ENCODE measurements at regions of chr17 and their contacts with region 1.

Region 1: DNA sequence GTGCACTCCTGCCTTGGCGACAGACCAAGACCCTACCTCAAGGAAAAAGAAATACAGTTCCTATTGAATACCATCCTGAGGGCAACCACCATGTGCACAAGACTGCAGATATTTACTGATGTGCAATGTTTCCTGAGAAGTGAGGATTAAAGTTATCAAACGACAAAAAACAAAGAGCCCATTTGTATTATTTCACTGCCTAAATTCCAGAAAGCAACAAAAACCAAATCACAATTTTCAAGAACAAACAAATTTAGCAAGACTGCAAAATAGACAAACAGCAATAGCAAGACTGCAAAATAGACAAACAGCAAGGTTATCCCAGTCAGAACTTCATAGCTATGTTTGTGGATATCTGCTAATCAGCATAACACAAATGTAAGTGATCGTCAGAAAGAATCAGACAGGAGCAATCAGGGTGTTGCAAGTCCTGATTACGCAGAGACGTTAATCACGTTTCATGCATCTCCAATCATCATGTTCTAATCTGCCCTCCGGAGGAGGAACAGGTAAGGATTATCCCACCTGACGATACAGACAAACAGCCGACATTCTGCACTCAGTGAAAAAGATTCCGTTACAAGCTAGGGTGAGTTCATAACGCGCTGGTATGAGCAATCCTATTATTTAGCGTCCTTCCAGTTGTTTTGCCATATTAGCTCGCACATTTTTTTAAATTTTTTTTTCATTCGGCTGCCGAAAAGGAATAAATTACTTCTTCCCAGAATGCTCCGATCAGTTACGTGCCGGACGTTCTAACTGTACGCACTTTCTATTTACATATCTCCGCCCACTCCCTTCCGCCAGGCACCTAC is 2.9 kb downstream of the TMEM107 start:
- DNase-seq: peak; percentile 96
- ATAC-seq: peak; percentile 86
- H3K4me3 Mint-ChIP-seq: peak overlapping the region; percentile 89
- H3K27ac Mint-ChIP-seq: peak overlapping the region; percentile 100
- H3K4me1 Mint-ChIP-seq: peaks cover 39% of the 10 kb centered on the region
- H3K27me3 Mint-ChIP-seq: no peaks in the 10 kb centered on the region
- CTCF ChIP-seq: no peak

Region 2: DNA sequence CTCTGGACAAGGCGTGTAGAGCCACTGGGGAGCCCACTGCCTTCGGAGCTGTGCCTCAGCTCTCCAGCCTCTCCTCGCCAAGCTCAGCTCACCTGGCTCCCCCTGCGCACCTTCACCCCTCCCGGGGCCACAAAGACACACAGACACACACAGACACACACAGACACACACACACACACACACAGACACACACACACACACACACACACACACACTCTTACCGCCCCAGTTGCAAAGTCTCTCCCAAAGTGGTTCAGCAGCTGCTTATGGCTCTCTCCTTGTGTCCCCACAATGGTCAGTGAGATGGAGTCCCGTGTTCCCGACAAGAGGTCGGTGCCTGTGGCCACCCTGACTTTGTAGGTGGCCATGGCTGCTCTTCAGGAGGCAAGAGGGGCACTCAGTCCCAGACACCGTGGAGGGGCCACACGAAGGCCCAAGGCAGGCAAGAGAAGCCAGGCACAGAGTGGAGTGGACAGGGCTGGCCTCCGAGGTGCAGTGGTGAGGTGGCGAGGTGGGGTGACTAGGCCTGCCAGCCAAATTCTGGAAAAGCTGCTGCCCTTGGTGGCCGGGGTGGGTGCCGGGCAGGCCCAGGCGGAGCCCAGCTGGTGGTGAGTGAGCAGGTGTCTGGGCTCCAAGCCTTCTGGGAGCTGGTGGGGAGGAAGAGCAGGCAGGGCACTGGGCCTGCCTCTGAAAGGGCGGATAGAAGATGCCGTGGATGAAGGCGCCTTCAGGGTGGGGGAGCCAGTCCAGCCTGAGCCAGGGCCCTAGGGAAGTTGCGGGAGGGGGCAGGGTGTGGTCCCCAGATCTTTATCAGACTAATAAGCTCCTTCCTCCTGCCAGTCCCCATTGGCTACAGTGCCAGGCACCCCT is 86.0 kb before region 1 on chr17 and contains the start of gene ALOX12B:
- CTCF ChIA-PET with region 1: no interaction called
- POLR2A ChIA-PET with region 1: no interaction called
- intact Hi-C with region 1: no loop called
- DNase-seq: no peak
- ATAC-seq: no peak
- H3K4me3 Mint-ChIP-seq: no peak within 1 kb of the TSS
- H3K27ac Mint-ChIP-seq: no peak within 1 kb of the TSS
- H3K4me1 Mint-ChIP-seq: no peaks in the 10 kb centered on the region
- H3K27me3 Mint-ChIP-seq: peaks cover 20% of the 10 kb centered on the region
- CTCF ChIP-seq: no peak
- total RNA-seq, gene ALOX12B: 4.3 to 5.2 TPM

Region 3: GRCh38 chr17:8131844-8132441 is 41.3 kb before region 1 on chr17:
- CTCF ChIA-PET with region 1: interaction called, 3 read pairs
- POLR2A ChIA-PET with region 1: interaction called, 33 read pairs
- intact Hi-C with region 1: no loop called
- DNase-seq: no peak
- ATAC-seq: peak; percentile 63
- H3K4me3 Mint-ChIP-seq: no peak overlapping the region
- H3K27ac Mint-ChIP-seq: no peak overlapping the region
- H3K4me1 Mint-ChIP-seq: peaks cover 8% of the 10 kb centered on the region
- H3K27me3 Mint-ChIP-seq: peaks cover 6% of the 10 kb centered on the region
- CTCF ChIP-seq: no peak

Region 4: DNA sequence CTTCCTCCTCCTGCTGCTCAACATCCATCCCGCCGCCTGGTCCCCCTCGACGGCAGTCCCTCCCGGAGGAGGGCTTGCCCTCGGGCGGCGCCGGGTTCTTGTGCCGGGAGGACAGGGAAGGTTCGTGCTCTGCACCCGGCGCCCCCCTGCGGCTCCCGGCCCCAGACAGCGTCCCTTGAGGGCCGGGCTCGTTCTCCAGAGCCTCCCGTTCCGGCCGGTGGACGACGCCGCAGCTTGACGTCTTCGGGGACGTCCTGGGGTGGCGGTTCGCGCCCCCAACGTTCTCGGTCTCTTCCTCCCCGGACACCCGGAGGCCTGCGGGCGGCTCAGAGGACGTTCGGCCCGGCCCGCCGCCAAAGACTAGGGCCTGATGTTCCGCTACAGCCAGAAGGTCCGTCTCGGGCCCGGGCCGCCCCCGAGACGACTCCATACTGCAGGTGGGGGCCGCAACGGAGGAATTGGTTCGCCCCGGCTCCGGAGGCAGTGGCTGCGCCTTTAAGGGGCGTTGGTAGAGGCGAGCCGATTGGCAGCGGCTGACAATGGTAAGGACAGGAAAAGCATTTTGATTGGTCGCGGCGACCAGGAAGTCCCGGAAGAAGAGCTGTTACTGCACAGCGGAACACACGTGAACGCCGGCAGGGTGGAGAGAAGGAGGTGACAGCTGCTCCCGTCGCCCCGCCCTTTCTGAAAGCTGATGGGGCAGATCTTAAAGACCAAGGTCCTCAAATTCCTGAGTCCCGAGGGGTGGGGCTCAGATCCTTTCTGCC is 16.6 kb after region 1 on chr17 and contains the start of gene BORCS6:
- CTCF ChIA-PET with region 1: interaction called, 4 read pairs
- POLR2A ChIA-PET with region 1: interaction called, 273 read pairs
- intact Hi-C with region 1: no loop called
- DNase-seq: peak; percentile 98
- ATAC-seq: peak; percentile 67
- H3K4me3 Mint-ChIP-seq: no peak within 1 kb of the TSS
- H3K27ac Mint-ChIP-seq: peak within 1 kb of the TSS; percentile 90
- H3K4me1 Mint-ChIP-seq: peaks cover 10% of the 10 kb centered on the region
- H3K27me3 Mint-ChIP-seq: no peaks in the 10 kb centered on the region
- CTCF ChIP-seq: no peak
- total RNA-seq, gene BORCS6: 5.5 to 6.2 TPM

Region 5: DNA sequence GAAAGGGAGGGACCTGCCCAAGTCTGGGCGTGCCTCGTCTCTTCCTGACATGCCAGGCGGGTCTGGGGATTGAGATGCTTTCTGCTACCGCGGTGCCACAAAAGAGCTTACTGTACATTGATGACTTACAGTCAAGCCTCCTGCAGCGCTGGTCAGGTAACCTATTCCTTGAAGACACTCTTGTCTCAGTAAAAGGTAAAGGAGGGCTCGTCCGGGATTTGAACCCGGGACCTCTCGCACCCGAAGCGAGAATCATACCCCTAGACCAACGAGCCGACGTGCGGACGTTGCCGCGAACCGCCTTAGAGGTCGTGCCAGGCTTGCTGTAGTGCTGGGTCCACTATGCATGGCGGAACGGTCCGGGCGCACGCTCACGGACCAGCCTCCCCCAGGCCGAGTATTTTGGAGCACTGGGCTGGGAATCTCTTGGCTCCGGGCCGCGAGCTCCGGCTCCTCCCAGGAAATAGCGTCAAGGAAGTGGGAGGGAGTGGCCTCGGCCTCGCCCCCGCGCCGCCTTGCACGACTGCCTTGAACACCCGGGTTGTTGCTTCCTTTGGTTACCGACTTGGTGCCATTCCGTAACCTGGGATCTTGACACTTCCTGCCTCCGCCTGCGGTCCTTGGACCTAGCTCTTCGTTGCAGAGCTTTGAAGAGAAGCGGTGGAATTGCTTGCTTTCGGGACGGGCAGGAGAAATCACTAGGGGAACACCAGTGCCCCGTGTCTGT is 49.5 kb after region 1 on chr17:
- CTCF ChIA-PET with region 1: no interaction called
- POLR2A ChIA-PET with region 1: interaction called, 92 read pairs
- intact Hi-C with region 1: no loop called
- DNase-seq: peak; percentile 95
- ATAC-seq: peak; percentile 40
- H3K4me3 Mint-ChIP-seq: peak overlapping the region; percentile 97
- H3K27ac Mint-ChIP-seq: peak overlapping the region; percentile 99
- H3K4me1 Mint-ChIP-seq: peaks cover 34% of the 10 kb centered on the region
- H3K27me3 Mint-ChIP-seq: peaks cover 8% of the 10 kb centered on the region
- CTCF ChIP-seq: no peak

Region 6: DNA sequence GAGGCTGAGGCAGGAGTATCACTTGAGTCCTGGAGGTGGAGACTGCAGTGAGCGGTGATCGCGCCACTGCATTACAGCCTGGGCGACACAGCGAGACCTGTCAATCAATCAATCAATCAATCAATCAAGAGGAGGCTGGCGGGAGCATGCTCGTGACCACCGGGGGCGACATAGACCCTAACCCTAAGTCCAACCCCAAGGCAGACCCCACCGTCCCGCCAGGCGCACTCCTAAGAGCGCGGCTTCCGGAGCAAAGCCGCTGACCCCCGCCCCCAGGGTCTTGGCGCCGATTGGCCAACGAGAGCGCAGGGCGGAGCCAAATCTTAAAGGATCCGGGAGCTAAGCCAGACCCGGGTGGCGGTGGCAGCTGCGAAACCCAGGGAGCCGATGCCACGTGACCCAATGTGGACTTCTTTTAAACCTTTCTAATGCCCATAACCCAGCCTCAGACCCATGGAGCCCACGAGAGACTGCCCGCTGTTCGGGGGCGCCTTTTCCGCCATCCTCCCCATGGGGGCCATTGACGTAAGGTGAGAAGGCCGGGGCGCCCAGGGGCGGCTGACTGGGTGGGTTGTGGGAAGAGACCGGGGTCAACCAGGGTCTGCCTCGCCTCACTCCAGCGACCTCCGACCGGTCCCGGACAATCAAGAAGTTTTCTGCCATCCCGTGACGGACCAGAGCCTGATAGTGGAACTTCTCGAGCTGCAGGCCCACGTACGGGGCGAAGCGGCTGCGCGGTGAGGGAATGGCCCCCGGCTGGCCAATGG is 115.3 kb after region 1 on chr17 and contains the start of gene RANGRF:
- CTCF ChIA-PET with region 1: no interaction called
- POLR2A ChIA-PET with region 1: interaction called, 12 read pairs
- intact Hi-C with region 1: no loop called
- DNase-seq: peak; percentile 91
- ATAC-seq: peak; percentile 91
- H3K4me3 Mint-ChIP-seq: peak within 1 kb of the TSS; percentile 87
- H3K27ac Mint-ChIP-seq: peak within 1 kb of the TSS; percentile 97
- H3K4me1 Mint-ChIP-seq: peaks cover 32% of the 10 kb centered on the region
- H3K27me3 Mint-ChIP-seq: no peaks in the 10 kb centered on the region
- CTCF ChIP-seq: no peak
- total RNA-seq, gene RANGRF: 44.1 to 47.8 TPM

Region 7: GRCh38 chr17:8345052-8345682 is 171.9 kb after region 1 on chr17:
- CTCF ChIA-PET with region 1: no interaction called
- POLR2A ChIA-PET with region 1: no interaction called
- intact Hi-C with region 1: no loop called
- DNase-seq: peak; percentile 39
- ATAC-seq: no peak
- H3K4me3 Mint-ChIP-seq: no peak overlapping the region
- H3K27ac Mint-ChIP-seq: no peak overlapping the region
- H3K4me1 Mint-ChIP-seq: no peaks in the 10 kb centered on the region
- H3K27me3 Mint-ChIP-seq: peaks cover 13% of the 10 kb centered on the region
- CTCF ChIP-seq: no peak

Region 8: GRCh38 chr17:8463099-8463498 is 289.8 kb after region 1 on chr17:
- CTCF ChIA-PET with region 1: no interaction called
- POLR2A ChIA-PET with region 1: no interaction called
- intact Hi-C with region 1: no loop called
- DNase-seq: no peak
- ATAC-seq: no peak
- H3K4me3 Mint-ChIP-seq: no peak overlapping the region
- H3K27ac Mint-ChIP-seq: no peak overlapping the region
- H3K4me1 Mint-ChIP-seq: peaks cover 14% of the 10 kb centered on the region
- H3K27me3 Mint-ChIP-seq: no peaks in the 10 kb centered on the region
- CTCF ChIP-seq: no peak

Region 9: GRCh38 chr17:8488901-8489300 is 315.6 kb after region 1 on chr17:
- CTCF ChIA-PET with region 1: no interaction called
- POLR2A ChIA-PET with region 1: no interaction called
- intact Hi-C with region 1: no loop called
- DNase-seq: no peak
- ATAC-seq: no peak
- H3K4me3 Mint-ChIP-seq: no peak overlapping the region
- H3K27ac Mint-ChIP-seq: no peak overlapping the region
- H3K4me1 Mint-ChIP-seq: no peaks in the 10 kb centered on the region
- H3K27me3 Mint-ChIP-seq: no peaks in the 10 kb centered on the region
- CTCF ChIP-seq: no peak

Measured in activated CD8-positive, alpha-beta T cell treated with anti-CD3 and anti-CD28 coated beads for 36 hours (primary cell).